Activated CD4-positive, alpha-beta T cell treated with anti-CD3 and anti-CD28 coated beads, Interleukin-2, amount 10 ng/mL, durations not matched to agents 24 days and 14 days (primary cell): ENCODE measurements at regions of chr4 and their contacts with region 1.

Region 1: GRCh38 chr4:147581601-147582350 is 35.4 kb upstream of the TMEM184C start:
- DNase-seq: no peak
- H3K4me3 Mint-ChIP-seq: no peak overlapping the region
- H3K27ac Mint-ChIP-seq: no peak overlapping the region
- H3K4me1 Mint-ChIP-seq: no peaks in the 10 kb centered on the region
- H3K27me3 Mint-ChIP-seq: peaks cover 5% of the 10 kb centered on the region

Region 2: DNA sequence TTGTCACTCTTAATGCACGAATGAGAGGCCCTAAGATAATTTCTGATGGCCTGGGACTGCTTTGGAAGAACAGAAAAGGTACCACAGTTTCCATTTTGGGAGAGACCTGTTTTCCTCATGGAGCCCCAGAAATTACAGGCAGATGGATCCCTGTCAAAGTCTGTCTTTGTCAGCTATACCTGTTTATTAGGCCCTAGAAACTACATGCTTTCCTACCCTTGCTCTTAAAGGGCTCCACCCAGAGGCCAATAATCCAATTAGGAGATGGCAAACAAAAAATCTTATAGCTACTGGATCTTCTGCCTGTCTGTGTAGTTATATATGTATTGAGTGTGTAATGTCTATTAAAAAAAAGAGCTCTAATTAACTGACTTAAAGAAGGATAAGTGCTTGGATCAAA is 719.1 kb after region 1 on chr4:
- intact Hi-C with region 1: loop called (anchors 5 kb)
- DNase-seq: no peak
- H3K4me3 Mint-ChIP-seq: no peak overlapping the region
- H3K27ac Mint-ChIP-seq: no peak overlapping the region
- H3K4me1 Mint-ChIP-seq: no peaks in the 10 kb centered on the region
- H3K27me3 Mint-ChIP-seq: no peaks in the 10 kb centered on the region